GM10248 (cell line): ENCODE measurements at regions of chr10 and their contacts with region 1.

Region 1: GRCh38 chr10:79374312-79375191 is 27.3 kb downstream of the PPIF start:
- DNase-seq: peak; percentile 85
- CTCF ChIP-seq: peak; percentile 98

Region 2: DNA sequence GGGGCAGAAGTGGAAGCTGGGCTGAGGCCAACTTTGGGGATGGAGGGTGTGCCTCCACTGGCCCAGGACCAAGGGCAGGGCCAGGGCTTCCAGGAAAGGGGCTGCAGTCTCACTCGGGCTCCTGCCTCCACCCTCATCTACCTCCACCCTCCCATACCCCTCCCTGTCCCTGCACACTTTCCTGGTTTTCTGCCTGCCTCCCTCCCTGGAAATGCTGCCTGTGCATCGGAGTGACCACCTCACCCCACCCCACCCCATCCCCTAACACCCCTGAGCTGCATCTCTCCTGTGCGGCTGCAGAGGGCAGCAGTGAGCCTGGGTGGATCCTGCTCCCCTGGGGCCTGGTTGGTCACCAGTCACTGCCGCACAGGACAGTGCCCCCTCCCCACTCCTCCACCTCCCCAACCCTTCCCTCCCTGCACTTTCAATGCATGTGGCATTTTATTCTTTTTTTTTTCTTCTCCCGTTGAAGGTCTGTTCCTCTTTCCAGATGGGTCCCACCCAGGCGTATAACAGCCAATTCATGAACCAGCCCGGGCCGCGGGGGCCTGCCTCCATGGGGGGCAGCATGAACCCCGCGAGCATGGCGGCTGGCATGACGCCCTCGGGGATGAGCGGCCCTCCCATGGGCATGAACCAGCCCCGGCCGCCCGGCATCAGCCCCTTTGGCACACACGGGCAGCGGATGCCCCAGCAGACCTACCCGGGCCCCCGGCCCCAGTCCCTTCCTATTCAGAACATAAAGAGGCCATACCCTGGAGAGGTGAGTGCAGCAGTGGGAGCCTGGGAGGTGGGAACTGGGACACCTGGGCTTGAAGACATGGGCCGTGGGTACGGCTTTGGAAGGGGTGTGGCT is 81.4 kb before region 1 on chr10:
- CTCF ChIA-PET with region 1: no interaction called
- POLR2A ChIA-PET with region 1: no interaction called
- DNase-seq: peak; percentile 63
- CTCF ChIP-seq: peak; percentile 60

Region 3: DNA sequence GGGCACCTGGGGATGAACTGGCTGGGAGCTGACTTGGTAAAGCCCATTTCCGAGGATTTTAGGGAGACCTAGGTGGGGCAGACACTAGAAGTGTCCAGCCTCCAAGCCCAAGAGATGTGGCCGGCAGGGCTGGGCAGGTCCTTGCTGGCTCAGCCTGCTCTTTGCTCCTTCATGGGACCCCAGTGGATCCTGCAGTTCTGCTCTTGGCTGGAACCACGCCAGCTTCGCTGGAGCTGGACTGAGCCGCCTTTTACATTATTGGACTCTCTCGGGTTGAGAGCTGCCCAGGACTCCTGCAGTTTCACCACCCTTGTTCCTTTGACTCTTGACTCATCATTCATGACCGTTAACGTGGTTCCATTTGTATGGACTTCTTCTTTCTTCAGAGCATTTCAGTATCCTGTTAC is 21.5 kb before region 1 on chr10:
- CTCF ChIA-PET with region 1: interaction called, 16 read pairs
- POLR2A ChIA-PET with region 1: no interaction called
- DNase-seq: peak; percentile 6
- CTCF ChIP-seq: no peak

Region 4: DNA sequence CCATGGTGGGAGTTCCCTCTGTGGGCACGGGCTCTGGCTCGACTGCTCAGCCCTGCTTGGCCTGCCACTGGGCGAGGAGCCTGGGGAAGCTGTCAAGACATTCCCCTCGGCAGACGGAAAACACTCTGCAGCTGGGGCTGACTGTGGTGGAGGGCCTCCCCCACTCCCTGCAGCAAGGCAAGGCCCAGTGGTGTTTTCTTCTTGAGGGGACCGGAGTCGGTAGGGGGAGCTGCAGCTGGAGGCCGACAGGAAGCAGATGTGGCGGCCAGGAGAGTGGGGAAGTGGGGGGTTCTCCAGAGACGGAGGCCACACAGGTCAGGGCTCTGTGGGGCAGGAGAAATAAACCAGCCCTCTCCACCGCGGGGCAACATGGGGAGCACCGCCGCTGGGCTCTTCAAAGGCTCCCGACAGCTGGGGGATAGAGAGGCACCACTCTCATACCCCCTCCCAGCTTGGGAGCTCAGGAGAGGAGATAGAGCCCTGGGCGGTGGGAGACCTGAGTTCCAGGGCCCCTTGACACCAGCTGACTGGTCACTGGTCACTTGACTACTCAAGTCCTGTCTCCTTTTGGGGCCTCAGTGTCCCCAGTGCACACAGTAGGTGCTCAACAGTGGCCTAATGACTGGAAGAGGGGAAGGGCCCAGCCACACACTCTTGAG is 16.1 kb after region 1 on chr10:
- CTCF ChIA-PET with region 1: interaction called, 29 read pairs
- POLR2A ChIA-PET with region 1: no interaction called
- DNase-seq: no peak
- CTCF ChIP-seq: peak; percentile 26

Region 5: GRCh38 chr10:79422178-79422892 is 47.8 kb after region 1 on chr10:
- CTCF ChIA-PET with region 1: no interaction called
- POLR2A ChIA-PET with region 1: no interaction called
- DNase-seq: no peak
- CTCF ChIP-seq: no peak

Region 6: GRCh38 chr10:79468024-79468560 is 93.5 kb after region 1 on chr10:
- CTCF ChIA-PET with region 1: interaction called, 64 read pairs
- POLR2A ChIA-PET with region 1: no interaction called
- DNase-seq: no peak
- CTCF ChIP-seq: no peak

Region 7: DNA sequence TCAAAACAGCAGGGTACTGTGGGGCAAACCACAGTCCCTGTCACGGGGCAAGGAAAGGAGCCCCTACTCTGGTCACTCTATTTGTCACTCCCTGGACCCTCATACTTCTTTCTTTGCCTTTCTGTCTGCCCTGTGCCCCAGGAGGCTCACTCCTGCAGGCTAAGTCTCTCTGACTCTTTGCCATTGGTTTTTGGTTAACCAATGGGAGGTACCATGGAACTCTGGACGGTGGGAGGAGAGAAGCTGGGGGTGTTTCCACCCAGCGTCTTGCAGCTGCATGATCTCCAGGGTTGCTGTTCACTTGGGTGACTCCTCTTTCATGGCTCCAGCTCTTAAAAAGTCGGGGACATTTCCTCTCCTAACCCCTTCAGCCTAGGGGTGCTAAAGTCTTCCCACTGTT is 122.3 kb after region 1 on chr10:
- CTCF ChIA-PET with region 1: interaction called, 11 read pairs
- POLR2A ChIA-PET with region 1: no interaction called
- DNase-seq: no peak
- CTCF ChIP-seq: no peak